ENCODE measurements at regions of chr12 and their contacts with region 1.

Region 1: DNA sequence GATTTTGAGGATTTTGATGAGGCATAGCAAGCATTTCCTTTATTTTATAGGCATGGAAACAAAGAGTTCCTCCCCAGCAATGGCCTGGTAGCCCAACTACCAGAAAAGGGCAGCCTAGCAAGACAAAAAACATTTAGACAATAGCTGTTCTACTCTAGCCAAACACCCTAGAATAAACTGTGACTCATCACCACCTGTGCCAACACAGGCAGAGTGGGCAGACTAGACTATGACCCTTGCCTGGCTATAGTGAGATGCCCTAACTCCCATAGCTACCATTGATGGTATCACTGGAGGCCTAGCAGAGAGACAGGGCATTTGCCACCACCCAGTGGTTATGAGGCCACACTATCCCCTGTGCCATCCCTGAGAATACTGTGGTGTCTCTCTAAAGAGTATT is 15.5 kb upstream of the CCER1 start:
- DNase-seq: no peak
- ATAC-seq: 0 out of 2 replicates have a peak, but pooled peaks have one; percentile 32
- H3K4me3 ChIP-seq: no peak overlapping the region
- H3K27ac ChIP-seq: no peak overlapping the region
- H3K4me1 ChIP-seq: peaks cover 0 to 9% of the 10 kb centered on the region in 2 experiments; a peak in 1 of 4 replicates
- H3K27me3 ChIP-seq: no peaks in the 10 kb centered on the region
- CTCF ChIP-seq: no peak
- POLR2A ChIP-seq: no peak
- RAD21 ChIP-seq: no peak

Region 2: GRCh38 chr12:90959538-90960139 is 10.8 kb before region 1 on chr12:
- CTCF ChIA-PET with region 1: interaction called, 21 read pairs
- POLR2A ChIA-PET with region 1: no interaction called
- RAD21 ChIA-PET with region 1: no interaction called
- intact Hi-C with region 1: no loop called
- DNase-seq: peak; percentile 39
- ATAC-seq: peak; percentile 82
- H3K4me3 ChIP-seq: no peak overlapping the region
- H3K27ac ChIP-seq: no peak overlapping the region
- H3K4me1 ChIP-seq: no peaks in the 10 kb centered on the region
- H3K27me3 ChIP-seq: no peaks in the 10 kb centered on the region
- CTCF ChIP-seq: peak; percentile 55 to 68 (median 66); a peak in 5 of 6 replicates
- POLR2A ChIP-seq: no peak
- RAD21 ChIP-seq: peak; percentile 64